Activated CD4-positive, alpha-beta memory T cell treated with anti-CD3 and anti-CD28 coated beads, Interleukin-2, amount 10 ng/mL, durations not matched to agents 7 days and 5 days (primary cell): ENCODE measurements at regions of chr7 and their contacts with region 1.

Region 1: GRCh38 chr7:134690016-134690415 is 43.4 kb downstream of the BPGM start:
- DNase-seq: no peak
- H3K4me3 Mint-ChIP-seq: no peak overlapping the region
- H3K27ac Mint-ChIP-seq: no peak overlapping the region
- H3K4me1 Mint-ChIP-seq: peaks cover 30% of the 10 kb centered on the region
- H3K27me3 Mint-ChIP-seq: peaks cover 3% of the 10 kb centered on the region

Region 2: GRCh38 chr7:133837224-133837623 is 852.8 kb before region 1 on chr7:
- CTCF ChIA-PET with region 1: no interaction called
- POLR2A ChIA-PET with region 1: no interaction called
- DNase-seq: no peak
- H3K4me3 Mint-ChIP-seq: no peak overlapping the region
- H3K27ac Mint-ChIP-seq: no peak overlapping the region
- H3K4me1 Mint-ChIP-seq: no peaks in the 10 kb centered on the region
- H3K27me3 Mint-ChIP-seq: no peaks in the 10 kb centered on the region

Region 3: DNA sequence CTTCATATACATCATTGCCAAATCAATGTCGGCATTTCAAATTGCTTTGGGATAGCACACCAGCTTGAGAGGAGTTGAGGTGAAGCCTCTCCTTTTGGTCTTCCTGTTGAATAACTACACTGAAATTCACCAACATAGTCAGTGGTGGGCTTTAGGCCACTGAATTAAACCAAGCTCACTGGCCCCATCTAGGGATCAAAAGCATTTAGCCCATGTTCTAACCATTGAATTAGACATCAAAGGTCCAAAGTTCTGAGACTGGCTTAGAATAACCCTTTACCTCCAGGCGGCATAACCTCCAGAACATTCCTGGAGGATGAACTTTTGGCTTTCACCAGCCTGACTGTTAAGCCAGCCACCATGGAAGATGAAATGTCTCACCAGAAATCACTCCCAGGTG is 11.3 kb after region 1 on chr7:
- CTCF ChIA-PET with region 1: interaction called, 18 read pairs
- POLR2A ChIA-PET with region 1: no interaction called
- DNase-seq: no peak
- H3K4me3 Mint-ChIP-seq: no peak overlapping the region
- H3K27ac Mint-ChIP-seq: no peak overlapping the region
- H3K4me1 Mint-ChIP-seq: no peaks in the 10 kb centered on the region
- H3K27me3 Mint-ChIP-seq: no peaks in the 10 kb centered on the region

Region 4: GRCh38 chr7:134750083-134751062 is 60.4 kb after region 1 on chr7:
- CTCF ChIA-PET with region 1: interaction called, 21 read pairs
- POLR2A ChIA-PET with region 1: no interaction called
- DNase-seq: peak; percentile 66
- H3K4me3 Mint-ChIP-seq: no peak overlapping the region
- H3K27ac Mint-ChIP-seq: no peak overlapping the region
- H3K4me1 Mint-ChIP-seq: peaks cover 8% of the 10 kb centered on the region
- H3K27me3 Mint-ChIP-seq: no peaks in the 10 kb centered on the region

Region 5: DNA sequence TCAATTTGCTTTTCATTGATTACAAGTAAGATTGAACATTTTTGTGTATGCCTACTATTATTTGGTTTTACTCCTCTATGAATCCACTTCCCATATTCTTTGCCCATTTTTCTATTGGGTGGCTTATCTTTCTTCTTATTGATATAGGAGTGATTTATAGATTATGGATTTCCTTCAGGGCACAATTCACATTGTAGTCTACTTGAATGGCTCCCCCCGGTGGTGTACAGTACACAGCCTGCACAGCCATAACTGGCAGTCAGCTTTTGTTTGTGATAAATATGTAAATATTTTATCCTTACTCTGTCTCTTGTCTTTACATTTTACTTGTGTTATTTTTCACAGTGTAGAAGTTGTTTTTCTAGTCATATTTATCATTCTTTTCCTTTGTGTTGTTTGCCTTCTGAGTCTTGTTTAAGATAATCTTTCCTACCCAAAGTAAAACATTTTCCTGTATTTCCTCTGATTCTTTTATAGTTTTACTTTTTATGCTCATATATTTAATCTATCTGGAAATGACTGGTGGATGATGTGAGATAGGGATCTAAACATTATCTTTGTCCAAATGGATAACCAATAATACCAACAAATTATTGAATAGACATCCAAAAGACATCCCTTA is 65.5 kb after region 1 on chr7:
- CTCF ChIA-PET with region 1: interaction called, 21 read pairs
- POLR2A ChIA-PET with region 1: no interaction called
- DNase-seq: peak; percentile 50
- H3K4me3 Mint-ChIP-seq: no peak overlapping the region
- H3K27ac Mint-ChIP-seq: no peak overlapping the region
- H3K4me1 Mint-ChIP-seq: peaks cover 7% of the 10 kb centered on the region
- H3K27me3 Mint-ChIP-seq: peaks cover 2% of the 10 kb centered on the region